Activated B cell treated with CpG ODN at 0.5 μM for 24 hours (primary cell): ENCODE measurements at regions of chr4 and their contacts with region 1.

Region 1: DNA sequence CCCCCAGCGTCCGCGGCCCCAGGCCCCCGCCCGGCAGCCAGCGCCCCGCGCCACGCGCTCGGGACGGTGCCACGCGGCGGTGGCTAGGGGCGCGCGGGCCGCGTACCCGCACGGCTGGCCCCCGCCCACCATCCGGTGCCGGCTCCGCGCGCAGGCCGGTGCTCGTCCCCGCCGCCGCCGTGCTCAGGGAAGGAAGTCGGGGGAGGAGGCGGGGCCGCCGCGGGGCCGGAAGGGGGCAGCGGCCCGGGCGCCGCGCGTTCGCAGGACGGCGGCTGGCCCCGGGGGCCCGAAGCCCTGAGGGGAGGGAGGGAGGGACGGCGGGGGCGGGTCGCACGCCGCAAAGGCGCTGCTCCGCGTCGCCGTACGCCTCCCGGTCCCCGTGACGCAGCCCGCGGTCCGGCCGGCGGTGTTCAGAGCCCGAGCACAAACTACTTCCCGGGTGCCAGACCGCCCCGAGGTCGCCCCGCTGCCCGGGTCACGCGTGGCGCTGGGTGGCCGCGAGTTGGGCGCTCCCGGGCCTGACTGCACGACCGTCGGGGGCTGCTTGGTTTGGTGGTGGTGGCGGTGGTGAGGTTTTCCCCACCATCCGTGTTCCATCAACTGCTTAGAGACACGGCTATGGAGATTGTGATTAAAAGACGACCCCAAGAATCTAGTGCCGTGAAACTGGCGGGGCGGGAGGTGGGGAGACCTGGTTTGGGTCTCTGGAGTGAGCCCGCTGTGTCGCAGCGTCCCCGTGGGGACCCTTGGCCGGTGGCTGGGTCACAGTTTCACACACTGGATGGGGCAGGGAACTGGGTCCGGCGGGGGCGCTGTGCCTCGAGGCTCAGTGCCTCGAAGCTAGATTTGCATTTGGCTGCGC is at the start of gene DCTD:
- DNase-seq: peak; percentile 80
- ATAC-seq: peak; percentile 79
- H3K4me3 Mint-ChIP-seq: peak within 1 kb of the TSS; percentile 93
- H3K27ac Mint-ChIP-seq: peak within 1 kb of the TSS; percentile 94
- H3K4me1 Mint-ChIP-seq: peaks cover 33% of the 10 kb centered on the region
- H3K27me3 Mint-ChIP-seq: peaks cover 4% of the 10 kb centered on the region
- CTCF ChIP-seq: no peak
- total RNA-seq, gene DCTD: 75.7 and 76.8 TPM in 2 replicates

Region 2: GRCh38 chr4:182897601-182898478 is 19.6 kb before region 1 on chr4:
- CTCF ChIA-PET with region 1: no interaction called
- POLR2A ChIA-PET with region 1: no interaction called
- intact Hi-C with region 1: no loop called
- DNase-seq: no peak
- ATAC-seq: no peak
- H3K4me3 Mint-ChIP-seq: no peak overlapping the region
- H3K27ac Mint-ChIP-seq: no peak overlapping the region
- H3K4me1 Mint-ChIP-seq: no peaks in the 10 kb centered on the region
- H3K27me3 Mint-ChIP-seq: no peaks in the 10 kb centered on the region
- CTCF ChIP-seq: no peak

Region 3: GRCh38 chr4:182931691-182932345 is 14.4 kb after region 1 on chr4:
- CTCF ChIA-PET with region 1: no interaction called
- POLR2A ChIA-PET with region 1: no interaction called
- intact Hi-C with region 1: no loop called
- DNase-seq: no peak
- ATAC-seq: no peak
- H3K4me3 Mint-ChIP-seq: no peak overlapping the region
- H3K27ac Mint-ChIP-seq: no peak overlapping the region
- H3K4me1 Mint-ChIP-seq: no peaks in the 10 kb centered on the region
- H3K27me3 Mint-ChIP-seq: peaks cover 9% of the 10 kb centered on the region
- CTCF ChIP-seq: no peak

Region 4: GRCh38 chr4:183098723-183099536 is 181.5 kb after region 1 on chr4 and contains the start of gene WWC2:
- CTCF ChIA-PET with region 1: no interaction called
- POLR2A ChIA-PET with region 1: interaction called, 3 read pairs
- intact Hi-C with region 1: loop called (anchors 2 kb)
- DNase-seq: peak; percentile 27
- ATAC-seq: peak; percentile 71
- H3K4me3 Mint-ChIP-seq: peak within 1 kb of the TSS; percentile 72
- H3K27ac Mint-ChIP-seq: no peak within 1 kb of the TSS
- H3K4me1 Mint-ChIP-seq: peaks cover 7% of the 10 kb centered on the region
- H3K27me3 Mint-ChIP-seq: peaks cover 35% of the 10 kb centered on the region
- CTCF ChIP-seq: no peak
- total RNA-seq, gene WWC2: 0.47 and 0.76 TPM in 2 replicates

Region 5: DNA sequence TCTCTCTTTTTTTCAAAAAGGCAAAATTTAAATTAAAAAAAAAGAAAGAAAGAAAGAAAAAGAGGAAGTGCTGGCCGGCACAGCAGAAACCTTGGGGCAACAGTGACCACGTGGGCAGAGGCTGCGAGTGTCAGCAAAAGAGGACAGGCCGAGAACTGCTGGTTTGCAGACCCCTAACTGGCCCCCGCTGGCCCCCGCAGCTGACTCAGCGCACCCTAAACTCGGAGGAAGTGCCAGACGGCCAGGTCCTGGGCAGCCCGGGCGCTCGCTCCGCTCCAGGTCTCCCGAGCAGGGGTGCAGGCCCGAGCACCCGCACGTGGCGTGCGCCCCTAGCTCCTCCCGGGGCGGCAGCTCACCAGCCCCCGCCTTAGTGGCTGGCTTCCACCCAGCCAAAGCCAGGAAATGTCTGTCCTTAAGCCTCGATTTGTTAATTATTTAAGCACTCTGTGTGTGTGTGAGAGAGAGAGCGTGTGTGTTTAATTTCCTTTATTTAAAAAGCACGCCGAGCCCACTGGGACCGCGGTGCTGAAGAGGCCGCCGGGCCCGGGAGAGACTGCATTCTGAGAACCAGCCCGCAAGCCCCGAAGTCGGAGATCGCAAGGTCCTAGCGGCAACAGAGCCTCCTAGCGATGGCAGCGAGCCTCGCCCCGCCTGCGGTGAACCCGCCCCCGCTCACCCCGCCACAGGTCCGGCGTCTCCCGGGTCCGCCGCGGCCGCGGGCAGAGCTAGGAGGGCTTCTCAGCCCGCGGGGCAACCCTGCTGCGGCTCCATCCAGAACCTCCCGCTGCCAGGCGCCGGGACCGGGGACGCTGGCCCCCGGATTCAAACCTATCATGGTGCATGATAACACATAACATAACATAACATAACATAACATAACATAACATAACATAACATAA is 481.1 kb after region 1 on chr4:
- CTCF ChIA-PET with region 1: no interaction called
- POLR2A ChIA-PET with region 1: interaction called, 4 read pairs
- intact Hi-C with region 1: loop called (anchors 2 kb)
- DNase-seq: peak; percentile 57
- ATAC-seq: peak; percentile 89
- H3K4me3 Mint-ChIP-seq: peak overlapping the region; percentile 82
- H3K27ac Mint-ChIP-seq: peak overlapping the region; percentile 82
- H3K4me1 Mint-ChIP-seq: peaks cover 25% of the 10 kb centered on the region
- H3K27me3 Mint-ChIP-seq: peaks cover 7% of the 10 kb centered on the region
- CTCF ChIP-seq: no peak

Region 6: DNA sequence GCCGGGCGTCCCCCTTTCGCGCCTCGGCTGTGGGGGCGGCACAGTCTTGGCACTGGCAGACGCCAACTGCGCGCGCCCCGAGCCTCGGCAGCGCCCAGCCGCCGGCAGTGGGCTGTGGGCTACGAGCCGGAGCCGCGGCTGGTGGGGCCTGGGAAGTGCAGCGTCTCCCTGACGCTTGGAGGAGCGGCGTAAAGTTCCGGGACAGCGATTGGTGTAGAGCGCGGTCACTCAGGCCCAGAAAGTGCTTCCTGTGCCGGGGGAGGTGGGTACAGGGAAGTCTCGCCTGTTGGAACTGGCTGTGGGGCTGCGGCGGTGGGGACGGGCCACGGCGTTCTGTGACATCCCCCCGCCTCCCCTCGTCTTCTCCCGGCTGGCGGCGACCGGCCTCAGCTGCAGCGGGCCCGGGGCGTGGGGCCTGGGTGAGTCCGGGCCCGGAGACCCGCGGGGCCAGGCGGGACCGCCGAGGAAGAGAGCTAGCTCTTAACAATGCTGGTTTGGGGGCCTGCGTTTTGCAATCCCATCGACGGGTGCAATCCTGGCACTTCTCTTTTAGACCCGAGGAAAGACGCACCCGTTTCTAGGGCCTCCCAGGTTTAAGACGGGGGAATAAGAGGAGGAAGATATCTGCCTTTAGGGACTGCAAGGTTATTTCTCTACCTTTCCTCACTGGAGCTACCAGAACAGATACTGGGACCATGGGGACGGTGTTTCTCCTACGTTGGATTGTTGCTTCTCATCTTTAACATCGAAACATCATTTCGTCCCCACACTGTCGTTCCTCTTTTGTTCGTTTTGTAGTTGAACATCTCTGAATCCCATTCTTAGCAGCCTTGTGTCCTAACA is 741.8 kb after region 1 on chr4 and contains the starts of genes RWDD4 and TRAPPC11:
- CTCF ChIA-PET with region 1: no interaction called
- POLR2A ChIA-PET with region 1: interaction called, 4 read pairs
- intact Hi-C with region 1: loop called (anchors 1 kb)
- DNase-seq: peak; percentile 87
- ATAC-seq: peak; percentile 98
- H3K4me3 Mint-ChIP-seq: peak within 1 kb of the TSS; percentile 93
- H3K27ac Mint-ChIP-seq: peak within 1 kb of the TSS; percentile 92
- H3K4me1 Mint-ChIP-seq: peaks cover 33% of the 10 kb centered on the region
- H3K27me3 Mint-ChIP-seq: no peaks in the 10 kb centered on the region
- CTCF ChIP-seq: no peak
- total RNA-seq, gene RWDD4: 14.6 and 15.4 TPM in 2 replicates
- total RNA-seq, gene TRAPPC11: 42.9 and 45.2 TPM in 2 replicates